ENCODE measurements at regions of chr15 and their contacts with region 1.

Region 1: DNA sequence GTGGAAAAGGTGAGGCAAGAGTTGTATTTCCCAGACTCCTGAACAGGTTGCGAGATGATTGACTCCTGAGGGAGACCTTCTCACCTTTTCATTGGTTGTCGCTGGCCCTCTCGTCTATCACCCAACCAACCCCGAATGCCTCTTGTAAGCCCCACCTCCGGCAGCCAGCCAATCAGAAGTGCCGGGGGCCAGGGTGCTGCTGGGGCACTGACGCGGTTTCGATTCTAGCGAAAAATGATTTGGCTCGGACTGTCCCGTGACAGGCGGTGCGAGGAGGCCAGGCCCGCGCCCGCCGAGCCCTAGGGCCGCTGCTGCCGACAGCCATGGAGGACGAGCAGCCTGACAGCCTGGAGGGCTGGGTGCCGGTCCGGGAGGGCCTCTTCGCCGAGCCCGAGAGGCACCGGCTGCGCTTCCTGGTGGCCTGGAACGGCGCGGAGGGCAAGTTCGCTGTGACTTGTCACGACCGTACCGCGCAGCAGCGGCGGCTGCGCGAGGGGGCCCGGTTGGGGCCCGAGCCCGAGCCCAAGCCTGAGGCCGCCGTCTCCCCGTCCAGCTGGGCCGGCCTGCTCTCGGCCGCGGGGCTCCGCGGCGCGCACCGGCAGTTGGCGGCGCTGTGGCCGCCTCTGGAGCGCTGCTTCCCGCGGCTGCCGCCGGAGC is at the start of gene WHAMM:
- DNase-seq: peak; percentile 97
- ATAC-seq: peak; percentile 97
- H3K4me3 Mint-ChIP-seq: peak within 1 kb of the TSS; percentile 89
- H3K27ac Mint-ChIP-seq: peak within 1 kb of the TSS; percentile 86
- H3K4me1 Mint-ChIP-seq: peaks cover 34% of the 10 kb centered on the region
- H3K27me3 Mint-ChIP-seq: no peaks in the 10 kb centered on the region
- total RNA-seq, gene WHAMM: 3.4 to 4.0 TPM

Region 2: DNA sequence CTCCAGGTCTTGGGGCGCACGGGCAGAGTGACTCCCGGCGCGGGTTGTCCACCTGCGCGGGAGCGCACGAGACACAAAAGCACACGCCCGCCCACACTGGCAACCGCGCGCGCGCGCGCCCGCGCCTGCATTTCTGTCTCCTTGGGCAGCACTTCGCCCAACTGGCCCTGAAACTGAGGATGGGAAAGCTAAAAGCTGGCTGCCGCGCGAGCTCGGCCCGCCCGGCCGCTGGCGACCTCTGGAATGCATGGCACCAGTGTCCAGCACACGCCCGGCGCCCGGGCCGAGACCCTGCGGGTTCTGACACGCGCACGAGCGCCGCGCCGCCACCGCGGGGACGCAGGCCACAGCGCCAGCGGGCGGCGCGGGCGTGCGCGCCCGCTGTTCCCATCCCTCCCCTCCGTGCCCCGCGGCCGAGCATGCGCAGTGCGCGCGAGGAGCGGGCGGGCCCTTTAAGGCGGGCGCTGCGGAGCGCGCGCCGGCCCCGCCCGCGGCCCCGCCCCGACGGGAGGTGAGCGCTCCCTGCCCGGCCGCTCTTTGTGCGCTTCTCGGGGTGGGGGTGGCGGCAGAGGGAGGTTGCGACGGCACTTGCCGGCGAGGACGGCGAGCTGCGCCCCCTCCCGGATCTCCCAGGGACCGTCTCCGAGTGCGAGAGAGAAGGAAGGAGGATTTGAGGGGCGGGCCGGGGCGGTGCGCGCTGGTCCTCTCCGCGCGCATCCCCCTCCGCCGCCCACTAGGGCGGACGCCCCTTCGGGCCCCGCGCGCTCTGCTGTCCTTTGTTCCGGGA is 762.7 kb before region 1 on chr15:
- CTCF ChIA-PET with region 1: no interaction called
- POLR2A ChIA-PET with region 1: no interaction called
- intact Hi-C with region 1: loop called in 1 of 2 experiments (anchors 5 kb)
- DNase-seq: peak; percentile 95
- ATAC-seq: peak; percentile 77
- H3K4me3 Mint-ChIP-seq: peak overlapping the region; percentile 81
- H3K27ac Mint-ChIP-seq: peak overlapping the region; percentile 85
- H3K4me1 Mint-ChIP-seq: peaks cover 12% of the 10 kb centered on the region
- H3K27me3 Mint-ChIP-seq: peaks cover 21% of the 10 kb centered on the region

Region 3: GRCh38 chr15:82540055-82540983 is 269.2 kb before region 1 on chr15 and contains the start of gene RPS17:
- CTCF ChIA-PET with region 1: interaction called, 4 read pairs
- POLR2A ChIA-PET with region 1: interaction called, 3 read pairs
- intact Hi-C with region 1: loop called (anchors 2 to 10 kb)
- DNase-seq: peak; percentile 99
- ATAC-seq: peak; percentile 93
- H3K4me3 Mint-ChIP-seq: peak within 1 kb of the TSS; percentile 96
- H3K27ac Mint-ChIP-seq: peak within 1 kb of the TSS; percentile 96
- H3K4me1 Mint-ChIP-seq: peaks cover 23% of the 10 kb centered on the region
- H3K27me3 Mint-ChIP-seq: no peaks in the 10 kb centered on the region
- total RNA-seq, gene RPS17: 2,882 to 3,294 TPM

Region 4: GRCh38 chr15:82709421-82710207 is 99.9 kb before region 1 on chr15 and contains the start of gene AP3B2:
- CTCF ChIA-PET with region 1: no interaction called
- POLR2A ChIA-PET with region 1: no interaction called
- intact Hi-C with region 1: loop called in 1 of 2 experiments (anchors 1 kb)
- DNase-seq: peak; percentile 85
- ATAC-seq: peak; percentile 97
- H3K4me3 Mint-ChIP-seq: peak within 1 kb of the TSS; percentile 52
- H3K27ac Mint-ChIP-seq: no peak within 1 kb of the TSS
- H3K4me1 Mint-ChIP-seq: no peaks in the 10 kb centered on the region
- H3K27me3 Mint-ChIP-seq: peaks cover 15% of the 10 kb centered on the region
- total RNA-seq, gene AP3B2: 0.39 to 0.59 TPM

Region 5: DNA sequence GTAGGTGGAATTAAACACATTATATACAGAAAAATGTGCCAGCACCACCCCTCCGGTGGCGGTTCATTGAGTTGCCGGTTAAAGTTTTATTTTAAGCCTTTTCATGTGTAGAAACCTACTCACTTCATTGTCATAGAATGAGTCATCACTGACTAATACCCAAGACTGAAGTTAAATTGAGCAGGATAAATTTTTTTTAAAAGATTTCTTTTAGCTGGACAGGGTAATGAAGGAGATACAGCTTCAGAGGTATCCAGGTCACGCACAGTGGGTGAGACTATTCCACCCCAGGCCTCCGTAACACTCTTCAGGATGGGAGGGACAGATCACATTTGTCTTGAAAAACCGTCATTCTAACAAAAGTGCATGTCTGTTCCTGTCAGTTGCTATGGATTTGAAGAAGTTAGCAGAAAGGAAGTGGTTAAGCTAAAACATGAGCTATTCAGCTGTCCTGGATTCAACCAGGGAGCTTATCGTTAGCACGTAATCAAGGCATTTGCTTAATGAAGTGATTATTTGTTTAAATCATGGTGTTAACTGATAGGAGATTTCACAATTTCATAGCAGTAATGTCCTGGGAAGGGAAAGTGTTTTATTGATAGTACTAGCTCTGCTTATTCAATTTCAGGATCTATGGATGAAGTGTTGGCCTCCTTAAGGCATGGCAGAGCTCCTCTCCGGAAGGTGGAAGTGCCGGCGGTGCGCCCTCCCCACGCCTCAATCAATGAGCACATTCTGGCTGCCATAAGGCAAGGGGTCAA is 23.2 kb after region 1 on chr15:
- CTCF ChIA-PET with region 1: interaction called, 5 read pairs
- POLR2A ChIA-PET with region 1: no interaction called
- intact Hi-C with region 1: loop called (anchors 1 kb)
- DNase-seq: peak; percentile 72
- ATAC-seq: peak; percentile 92
- H3K4me3 Mint-ChIP-seq: no peak overlapping the region
- H3K27ac Mint-ChIP-seq: peak overlapping the region; percentile 7
- H3K4me1 Mint-ChIP-seq: peaks cover 34% of the 10 kb centered on the region
- H3K27me3 Mint-ChIP-seq: no peaks in the 10 kb centered on the region

Region 6: DNA sequence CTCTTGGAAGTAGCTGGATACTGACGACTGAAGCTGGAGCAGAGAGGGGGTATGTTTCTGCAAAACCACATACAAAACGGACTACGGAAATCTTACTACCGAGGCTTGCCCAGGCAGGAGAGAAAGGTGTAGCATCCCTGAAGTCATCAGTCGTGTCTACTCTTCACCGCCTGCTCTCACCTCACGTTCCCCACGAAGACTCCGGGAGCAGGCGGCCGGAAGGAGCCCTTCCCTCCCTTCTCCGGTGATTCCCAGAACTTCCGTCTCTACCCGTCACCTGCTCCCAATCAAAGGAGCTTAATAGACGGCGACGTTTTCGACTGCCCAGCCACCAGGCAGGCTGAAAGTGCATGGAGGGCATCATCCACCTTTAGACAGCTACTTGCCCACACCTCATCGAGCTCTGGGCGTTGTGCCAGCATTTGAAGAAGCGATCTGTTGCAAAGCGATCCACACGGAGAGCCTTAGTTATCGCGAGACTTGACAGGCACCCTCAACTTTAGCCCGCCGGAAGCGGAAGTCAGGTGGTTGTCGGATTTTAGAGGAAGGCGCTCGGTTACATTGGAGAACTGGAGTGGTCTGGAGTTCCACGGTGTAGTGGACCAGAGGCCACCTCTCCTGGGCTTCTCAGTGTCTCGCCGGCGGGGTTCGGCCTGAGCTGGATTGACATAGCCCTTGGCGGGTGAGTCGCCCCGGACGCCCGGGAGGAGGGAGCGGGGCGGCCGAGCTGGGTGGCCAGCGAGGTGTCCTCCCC is 176.3 kb after region 1 on chr15 and contains the start of gene RAMAC:
- CTCF ChIA-PET with region 1: no interaction called
- POLR2A ChIA-PET with region 1: no interaction called
- intact Hi-C with region 1: loop called in 1 of 2 experiments (anchors 1 kb)
- DNase-seq: peak; percentile 96
- ATAC-seq: peak; percentile 94
- H3K4me3 Mint-ChIP-seq: peak within 1 kb of the TSS; percentile 98
- H3K27ac Mint-ChIP-seq: peak within 1 kb of the TSS; percentile 98
- H3K4me1 Mint-ChIP-seq: peaks cover 21% of the 10 kb centered on the region
- H3K27me3 Mint-ChIP-seq: no peaks in the 10 kb centered on the region
- total RNA-seq, gene RAMAC: 17.3 to 19.5 TPM

Region 7: GRCh38 chr15:83199288-83199687 is 389.8 kb after region 1 on chr15:
- CTCF ChIA-PET with region 1: no interaction called
- POLR2A ChIA-PET with region 1: no interaction called
- intact Hi-C with region 1: loop called in 1 of 2 experiments (anchors 2 kb)
- DNase-seq: peak; percentile 37
- ATAC-seq: peak; percentile 91
- H3K4me3 Mint-ChIP-seq: no peak overlapping the region
- H3K27ac Mint-ChIP-seq: no peak overlapping the region
- H3K4me1 Mint-ChIP-seq: peaks cover 20% of the 10 kb centered on the region
- H3K27me3 Mint-ChIP-seq: peaks cover 17% of the 10 kb centered on the region